OCI-LY7 (cell line): ENCODE measurements at regions of chr13 and their contacts with region 1.

Region 1: DNA sequence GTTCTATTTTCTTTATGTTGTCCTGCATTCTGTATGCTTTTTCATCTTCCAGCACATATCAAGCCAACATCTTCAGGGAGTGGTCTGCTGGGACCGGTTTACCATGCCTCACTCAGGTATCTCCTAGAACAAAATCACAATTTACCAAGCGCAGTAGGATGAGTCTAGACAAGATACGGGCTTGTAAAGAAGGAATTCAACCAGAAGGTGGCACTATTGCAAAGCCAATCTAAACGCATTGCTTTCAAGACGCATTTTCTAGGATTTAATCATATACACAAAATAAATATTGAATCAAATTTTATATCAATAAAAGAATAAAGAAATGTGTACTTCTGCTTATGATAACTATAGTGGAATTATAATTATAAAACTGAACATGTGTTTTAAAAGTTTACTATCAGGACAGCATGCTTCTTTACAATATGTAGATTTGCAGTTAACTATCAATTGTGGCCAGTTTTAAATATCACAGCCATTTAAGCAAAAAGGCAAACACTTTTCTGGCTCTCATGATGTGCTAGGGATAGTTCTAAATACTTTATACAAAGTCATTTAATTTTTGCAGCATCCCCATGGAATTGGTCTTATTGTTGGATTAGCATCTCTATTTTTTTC is 16.1 kb upstream of the TPP2 start:
- DNase-seq: peak; percentile 59
- H3K4me3 ChIP-seq: no peak overlapping the region
- H3K27ac ChIP-seq: no peak overlapping the region
- H3K4me1 ChIP-seq: peaks cover 7% of the 10 kb centered on the region
- CTCF ChIP-seq: peak; percentile 81

Region 2: DNA sequence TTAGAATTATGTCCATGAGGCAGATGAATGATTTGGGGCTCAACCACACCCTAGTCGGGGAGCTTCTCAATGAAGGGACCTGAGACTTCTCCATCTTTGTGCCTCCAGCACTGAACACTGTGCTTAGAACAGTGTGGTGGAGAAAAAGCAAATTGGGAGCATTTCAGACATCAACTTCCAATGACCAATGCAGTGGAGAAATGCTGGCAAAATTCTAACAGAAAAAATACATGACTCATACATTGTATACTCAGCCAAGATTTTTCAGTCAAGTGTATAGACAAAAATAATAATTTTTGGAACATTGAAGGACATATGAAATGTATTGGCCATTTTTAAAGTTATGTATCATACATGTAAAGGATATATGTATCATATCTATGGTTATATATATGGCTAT is 313.5 kb before region 1 on chr13:
- CTCF ChIA-PET with region 1: no interaction called
- POLR2A ChIA-PET with region 1: no interaction called
- intact Hi-C with region 1: no loop called
- DNase-seq: no peak
- H3K4me3 ChIP-seq: no peak overlapping the region
- H3K27ac ChIP-seq: no peak overlapping the region
- H3K4me1 ChIP-seq: no peaks in the 10 kb centered on the region
- CTCF ChIP-seq: no peak

Region 3: GRCh38 chr13:102596147-102597028 is 15.7 kb after region 1 on chr13 and contains the start of gene TPP2:
- CTCF ChIA-PET with region 1: no interaction called
- POLR2A ChIA-PET with region 1: no interaction called
- intact Hi-C with region 1: no loop called
- DNase-seq: peak; percentile 93
- H3K4me3 ChIP-seq: peak within 1 kb of the TSS; percentile 86
- H3K27ac ChIP-seq: peak within 1 kb of the TSS; percentile 91
- H3K4me1 ChIP-seq: peaks cover 24% of the 10 kb centered on the region
- CTCF ChIP-seq: no peak
- total RNA-seq, gene TPP2: 31.1 and 31.4 TPM in 2 replicates

Region 4: GRCh38 chr13:102724923-102725322 is 144.3 kb after region 1 on chr13:
- CTCF ChIA-PET with region 1: no interaction called
- POLR2A ChIA-PET with region 1: no interaction called
- intact Hi-C with region 1: loop called (anchors 2 kb)
- DNase-seq: peak; percentile 8
- H3K4me3 ChIP-seq: no peak overlapping the region
- H3K27ac ChIP-seq: no peak overlapping the region
- H3K4me1 ChIP-seq: no peaks in the 10 kb centered on the region
- CTCF ChIP-seq: peak; percentile 60